ENCODE measurements at regions of chr5 and their contacts with region 1.

Region 1: DNA sequence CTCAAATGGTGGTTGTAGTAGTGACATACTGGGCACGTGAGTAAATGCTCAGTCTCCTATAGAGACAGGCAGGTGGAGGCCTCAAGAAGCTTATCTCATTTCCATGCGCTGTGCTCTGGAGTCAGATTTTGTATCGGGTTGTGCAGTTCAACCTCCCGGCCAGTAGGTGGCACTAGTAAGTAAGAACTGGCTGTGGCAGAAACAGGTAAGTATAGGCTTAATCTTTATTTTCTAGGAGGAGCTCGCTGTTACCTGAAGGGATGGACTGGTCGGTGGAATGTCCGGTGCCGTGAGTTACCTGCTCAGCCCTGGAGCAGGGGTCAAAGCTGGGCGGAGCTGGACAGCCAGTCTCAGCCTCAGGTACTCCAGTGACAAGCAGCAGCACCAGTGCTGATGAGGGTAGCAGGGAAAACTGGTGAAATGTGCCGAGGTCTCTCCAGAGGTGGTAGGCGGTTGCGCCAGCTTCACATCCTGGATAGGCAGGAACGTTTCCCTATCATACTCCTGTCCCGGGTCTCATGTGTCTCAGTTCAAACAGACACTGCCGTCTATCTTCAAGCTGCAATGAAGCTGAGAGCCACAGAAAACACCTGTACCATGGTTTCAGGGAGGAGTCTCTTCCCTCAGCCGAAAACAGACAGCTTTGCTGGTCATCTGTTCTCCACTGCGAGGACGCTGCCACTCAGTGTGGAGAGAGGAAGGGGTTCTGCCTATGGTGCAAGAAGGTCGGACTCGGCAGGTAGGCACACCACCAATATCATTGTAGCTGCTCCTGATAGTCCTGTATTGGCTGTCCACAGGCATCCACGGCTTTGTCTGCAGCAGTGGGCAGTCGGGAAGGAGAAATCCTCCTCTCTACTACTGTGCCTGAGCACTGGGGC is 880.3 kb upstream of the SEMA6A start:
- H3K4me3 Mint-ChIP-seq: no peak overlapping the region
- H3K27ac Mint-ChIP-seq: no peak overlapping the region
- H3K4me1 Mint-ChIP-seq: no peaks in the 10 kb centered on the region
- H3K27me3 Mint-ChIP-seq: no peaks in the 10 kb centered on the region

Region 2: GRCh38 chr5:116137544-116138378 is 1317.2 kb before region 1 on chr5:
- intact Hi-C with region 1: loop called (anchors 10 kb)
- H3K4me3 Mint-ChIP-seq: no peak overlapping the region
- H3K27ac Mint-ChIP-seq: no peak overlapping the region
- H3K4me1 Mint-ChIP-seq: no peaks in the 10 kb centered on the region
- H3K27me3 Mint-ChIP-seq: no peaks in the 10 kb centered on the region

Region 3: GRCh38 chr5:117973785-117974184 is 518.8 kb after region 1 on chr5:
- intact Hi-C with region 1: no loop called
- H3K4me3 Mint-ChIP-seq: no peak overlapping the region
- H3K27ac Mint-ChIP-seq: no peak overlapping the region
- H3K4me1 Mint-ChIP-seq: no peaks in the 10 kb centered on the region
- H3K27me3 Mint-ChIP-seq: no peaks in the 10 kb centered on the region

Region 4: DNA sequence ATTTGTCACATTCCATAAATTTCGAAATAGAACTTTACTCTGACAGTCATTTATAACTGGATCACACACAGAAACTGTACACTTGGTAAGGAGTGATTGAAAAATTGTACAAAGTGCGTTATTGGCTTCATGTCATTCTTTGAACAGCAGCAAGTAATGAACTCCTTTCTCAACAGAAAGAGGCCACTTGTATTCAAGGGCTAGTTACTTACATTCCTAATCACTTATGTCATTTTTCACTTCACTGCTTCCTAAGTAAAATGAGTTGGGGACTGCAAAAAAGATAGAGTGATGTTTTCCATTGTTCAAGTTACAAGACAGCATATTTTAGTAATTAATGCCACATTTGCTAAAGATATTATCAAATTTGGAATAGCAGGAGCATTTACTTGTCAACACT is 640.2 kb after region 1 on chr5:
- intact Hi-C with region 1: no loop called
- H3K4me3 Mint-ChIP-seq: no peak overlapping the region
- H3K27ac Mint-ChIP-seq: no peak overlapping the region
- H3K4me1 Mint-ChIP-seq: no peaks in the 10 kb centered on the region
- H3K27me3 Mint-ChIP-seq: no peaks in the 10 kb centered on the region

Region 5: GRCh38 chr5:118611332-118611945 is 1156.5 kb after region 1 on chr5:
- intact Hi-C with region 1: loop called (anchors 1 kb)
- H3K4me3 Mint-ChIP-seq: no peak overlapping the region
- H3K27ac Mint-ChIP-seq: no peak overlapping the region
- H3K4me1 Mint-ChIP-seq: no peaks in the 10 kb centered on the region
- H3K27me3 Mint-ChIP-seq: no peaks in the 10 kb centered on the region

Region 6: DNA sequence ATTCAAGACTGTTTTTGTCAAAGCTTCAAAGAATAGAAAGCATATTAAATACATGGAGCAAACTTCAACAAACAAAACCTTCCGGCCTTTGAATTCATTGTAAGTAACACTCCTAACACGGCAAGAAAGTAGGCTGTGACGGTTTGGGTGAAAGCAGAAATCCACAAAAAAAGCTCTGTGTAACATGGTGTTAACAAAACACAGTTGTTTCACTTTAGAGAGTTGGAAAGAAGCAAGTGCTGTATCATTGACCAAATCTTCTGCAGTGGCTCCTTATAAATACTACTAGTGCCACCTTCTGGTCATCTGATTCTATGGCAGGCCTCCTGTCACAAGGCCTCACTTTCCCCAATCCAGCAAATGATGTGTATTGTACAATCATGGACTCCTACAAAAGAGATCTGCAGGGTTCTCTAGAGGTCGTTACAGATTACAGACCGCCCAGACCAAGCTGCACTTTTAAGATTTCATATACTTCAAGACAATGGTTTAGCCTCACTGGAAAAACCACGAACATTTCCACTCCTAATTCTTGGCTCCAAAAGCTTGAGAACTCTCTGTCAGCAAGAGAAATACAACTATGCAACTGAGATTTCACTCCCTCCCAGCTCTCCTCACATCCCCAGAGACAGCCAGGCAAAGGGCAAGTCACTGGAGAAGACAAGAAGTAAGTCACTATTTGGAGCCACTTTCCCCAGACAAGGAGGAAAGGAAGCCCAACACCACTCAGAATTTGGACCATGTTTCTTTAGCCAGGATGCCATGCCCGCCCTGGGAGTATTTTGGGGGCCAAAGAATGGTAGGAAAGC is 1337.2 kb after region 1 on chr5:
- intact Hi-C with region 1: loop called (anchors 1 kb)
- H3K4me3 Mint-ChIP-seq: no peak overlapping the region
- H3K27ac Mint-ChIP-seq: no peak overlapping the region
- H3K4me1 Mint-ChIP-seq: peaks cover 2% of the 10 kb centered on the region
- H3K27me3 Mint-ChIP-seq: no peaks in the 10 kb centered on the region

Region 7: GRCh38 chr5:118956727-118957126 is 1501.8 kb after region 1 on chr5:
- intact Hi-C with region 1: loop called (anchors 10 kb)
- H3K4me3 Mint-ChIP-seq: no peak overlapping the region
- H3K27ac Mint-ChIP-seq: no peak overlapping the region
- H3K4me1 Mint-ChIP-seq: no peaks in the 10 kb centered on the region
- H3K27me3 Mint-ChIP-seq: no peaks in the 10 kb centered on the region